GM10248 (cell line): ENCODE measurements at regions of chrX and their contacts with region 1.

Region 1: DNA sequence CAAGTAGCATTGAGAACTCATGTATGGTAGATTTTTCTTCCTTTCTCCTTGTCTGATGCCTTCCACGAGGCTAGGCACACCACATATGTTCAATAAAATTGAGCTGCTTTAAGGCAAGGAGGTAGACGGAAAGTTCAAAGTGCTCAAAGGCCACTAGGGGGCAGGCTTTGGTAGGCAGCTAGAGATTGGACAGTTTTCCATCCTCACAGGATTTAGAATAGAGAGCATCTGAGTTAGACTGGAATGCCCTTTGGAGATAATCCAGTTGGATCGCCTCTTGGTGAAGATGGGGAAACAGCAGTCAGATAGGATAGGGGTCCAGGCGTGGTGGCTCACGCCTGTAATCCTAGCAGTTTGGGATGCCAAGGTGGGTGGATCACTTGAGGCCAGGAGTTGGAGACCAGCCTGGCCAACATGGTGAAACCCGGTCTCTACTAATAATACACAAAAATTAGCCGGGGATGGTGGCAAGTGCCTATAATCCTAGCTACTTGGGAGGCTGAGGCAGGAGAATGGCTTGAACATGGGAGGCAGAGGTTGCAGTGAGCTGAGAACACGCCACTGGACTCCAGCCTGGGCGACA is 30.4 kb downstream of the ELF4 start:
- DNase-seq: peak; percentile 56
- CTCF ChIP-seq: peak; percentile 69

Region 2: DNA sequence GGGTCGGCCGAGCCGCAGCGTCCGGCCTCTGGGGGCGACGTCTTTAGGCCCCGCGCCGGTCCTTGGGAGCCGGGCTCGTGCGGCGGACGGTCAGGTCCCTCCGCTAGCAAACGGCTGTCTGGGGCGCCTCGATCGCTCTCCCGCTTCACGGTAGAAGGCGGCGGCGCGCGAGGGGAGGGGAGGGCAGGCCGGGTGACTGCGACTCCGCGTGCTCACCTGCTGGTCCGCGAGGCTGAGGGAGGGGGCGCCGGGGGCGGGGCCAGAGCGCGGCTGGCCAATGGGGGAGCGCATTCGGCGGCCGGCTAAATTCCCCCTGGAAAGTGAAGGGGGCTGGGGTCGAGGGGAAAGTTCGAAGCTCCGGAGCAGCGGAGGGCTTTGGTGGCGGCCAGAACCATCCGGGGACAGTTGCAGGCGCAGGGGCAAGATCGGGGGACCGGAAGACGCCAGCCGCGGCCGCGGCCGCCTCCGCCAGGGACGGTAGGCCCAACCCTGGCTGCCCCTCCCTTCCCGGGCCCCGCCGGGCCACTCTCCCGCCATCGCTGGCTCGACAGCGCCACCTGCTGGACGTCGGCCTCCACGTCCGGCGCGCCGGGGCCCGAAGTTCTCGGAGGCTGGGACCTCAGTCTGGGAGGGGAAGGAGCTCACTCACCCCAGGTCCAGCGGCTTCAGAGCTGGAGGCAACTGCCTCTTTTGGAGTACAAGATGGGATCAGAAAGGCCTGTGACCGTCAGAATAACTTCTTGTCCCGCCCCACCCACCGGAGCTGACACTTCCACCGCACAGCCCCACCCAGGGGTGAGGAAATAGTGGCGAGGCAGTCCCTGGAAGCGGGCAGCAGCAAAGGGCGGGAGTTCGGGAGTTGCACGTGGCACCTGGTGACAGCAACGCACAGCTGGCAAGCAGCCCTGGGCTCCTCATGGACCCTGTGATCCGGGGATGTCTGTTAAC is 19.5 kb before region 1 on chrX:
- CTCF ChIA-PET with region 1: interaction called, 17 read pairs
- POLR2A ChIA-PET with region 1: interaction called, 5 read pairs
- DNase-seq: peak; percentile 91
- CTCF ChIP-seq: peak; percentile 77

Region 3: DNA sequence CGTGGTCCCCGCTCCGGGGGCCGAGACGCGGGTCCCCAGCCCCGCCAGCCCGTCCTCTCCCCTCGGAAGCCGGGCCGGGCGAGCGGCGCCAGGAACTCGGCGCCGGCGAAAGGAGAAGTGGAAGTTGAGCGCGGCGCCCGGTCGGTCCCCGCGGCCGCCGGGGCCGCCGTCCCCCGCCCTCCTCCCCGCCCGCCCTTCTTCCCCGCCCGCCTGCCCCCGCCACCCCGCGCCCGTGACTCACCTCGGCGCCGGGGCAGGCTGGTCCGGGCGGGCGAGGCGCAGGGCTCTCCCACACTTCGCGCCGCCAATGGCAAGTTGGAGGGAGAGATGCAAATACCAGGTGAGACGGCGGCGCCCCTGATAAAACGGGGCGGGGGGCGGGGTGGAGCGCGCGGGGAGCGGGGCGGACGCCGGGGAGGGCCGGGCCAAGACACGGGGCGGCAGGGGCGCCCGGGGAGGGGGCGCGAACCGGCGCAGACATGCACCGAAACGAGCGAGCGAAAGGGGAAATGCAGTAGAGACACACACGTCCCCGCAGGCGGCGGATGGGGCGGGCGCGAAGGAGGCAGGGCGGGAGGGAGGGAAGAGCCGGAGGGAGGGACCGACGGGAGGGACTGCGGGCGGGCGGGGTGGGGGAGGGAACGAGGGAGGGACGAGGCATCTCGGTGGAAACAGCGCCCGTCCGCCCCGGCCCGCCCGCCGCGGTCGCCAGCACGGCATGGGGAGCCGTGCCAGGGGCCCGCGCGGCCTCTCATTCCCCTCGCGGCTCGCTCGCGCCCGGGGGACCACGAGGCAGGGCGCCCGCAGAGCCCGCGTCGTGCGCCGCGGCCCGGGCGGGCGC is 30.7 kb after region 1 on chrX and contains the start of gene ELF4:
- CTCF ChIA-PET with region 1: interaction called, 92 read pairs
- POLR2A ChIA-PET with region 1: interaction called, 4 read pairs
- DNase-seq: peak; percentile 74
- CTCF ChIP-seq: peak; percentile 14

Region 4: GRCh38 chrX:130176354-130176776 is 96.5 kb after region 1 on chrX:
- CTCF ChIA-PET with region 1: interaction called, 10 read pairs
- POLR2A ChIA-PET with region 1: no interaction called
- DNase-seq: peak; percentile 55
- CTCF ChIP-seq: no peak

Region 5: GRCh38 chrX:130196466-130196865 is 116.6 kb after region 1 on chrX:
- CTCF ChIA-PET with region 1: interaction called, 56 read pairs
- POLR2A ChIA-PET with region 1: no interaction called
- DNase-seq: no peak
- CTCF ChIP-seq: no peak